ENCODE measurements at regions of chr11 and their contacts with region 1.

Region 1: DNA sequence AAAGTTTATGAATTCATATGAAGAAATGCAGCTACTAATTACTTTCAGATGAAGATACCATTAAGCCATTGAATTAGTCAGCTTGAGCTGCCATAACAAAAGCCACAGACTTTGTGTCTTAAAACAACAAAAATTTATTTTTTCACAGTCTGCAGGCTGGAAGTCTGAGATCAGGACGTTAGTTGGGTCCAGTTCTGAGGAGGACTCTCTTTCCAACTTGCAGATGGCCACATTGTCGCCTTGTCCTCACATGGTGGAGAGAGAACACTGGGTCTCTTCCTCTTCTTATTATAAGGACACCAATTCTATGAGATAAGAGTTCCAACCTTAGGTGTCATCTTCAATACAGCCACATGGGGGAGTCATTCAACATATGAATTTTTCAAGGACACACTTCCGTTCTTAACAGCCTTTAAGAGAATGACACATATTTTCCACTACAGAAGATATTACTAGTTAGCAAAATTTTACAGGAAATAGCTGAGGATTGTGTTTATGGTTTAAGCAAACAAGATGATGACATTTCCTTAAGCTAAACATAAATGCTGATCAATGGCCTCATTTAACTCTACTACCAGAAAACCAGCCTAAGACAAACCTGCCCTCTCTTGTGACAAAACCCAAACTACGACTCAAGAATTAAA is 56.0 kb downstream of the DCUN1D5 start:
- DNase-seq: peak; percentile 75
- ATAC-seq: peak; percentile 90
- H3K4me3 Mint-ChIP-seq: peak overlapping the region; percentile 38
- H3K27ac Mint-ChIP-seq: peak overlapping the region; percentile 79
- H3K4me1 Mint-ChIP-seq: peaks cover 14% of the 10 kb centered on the region
- H3K27me3 Mint-ChIP-seq: no peaks in the 10 kb centered on the region

Region 2: DNA sequence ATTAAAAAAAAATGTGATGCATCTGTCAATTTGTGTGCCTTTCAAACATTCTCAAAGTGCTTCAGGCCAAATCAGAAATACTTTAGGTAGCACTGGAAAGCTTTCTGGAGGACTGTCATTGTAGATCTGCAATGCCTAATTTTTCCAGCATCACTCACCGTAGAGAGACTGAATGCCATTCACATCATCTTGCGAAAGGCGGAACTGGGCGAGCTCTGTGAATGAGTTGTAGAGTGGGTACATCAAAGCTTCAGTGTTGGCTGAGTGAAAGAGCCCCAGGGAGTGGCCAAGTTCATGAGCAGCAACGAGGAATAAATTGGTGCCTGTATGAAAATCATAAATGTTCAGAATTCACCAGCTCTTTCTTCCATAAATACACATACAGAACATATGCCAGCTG is 259.5 kb before region 1 on chr11:
- CTCF ChIA-PET with region 1: no interaction called
- POLR2A ChIA-PET with region 1: no interaction called
- DNase-seq: no peak
- ATAC-seq: no peak
- H3K4me3 Mint-ChIP-seq: no peak overlapping the region
- H3K27ac Mint-ChIP-seq: no peak overlapping the region
- H3K4me1 Mint-ChIP-seq: no peaks in the 10 kb centered on the region
- H3K27me3 Mint-ChIP-seq: peaks cover 2% of the 10 kb centered on the region

Region 3: GRCh38 chr11:102940714-102941588 is 95.0 kb before region 1 on chr11:
- CTCF ChIA-PET with region 1: interaction called, 10 read pairs
- POLR2A ChIA-PET with region 1: no interaction called
- DNase-seq: peak; percentile 54
- ATAC-seq: peak; percentile 82
- H3K4me3 Mint-ChIP-seq: no peak overlapping the region
- H3K27ac Mint-ChIP-seq: no peak overlapping the region
- H3K4me1 Mint-ChIP-seq: peaks cover 2% of the 10 kb centered on the region
- H3K27me3 Mint-ChIP-seq: peaks cover 2% of the 10 kb centered on the region

Region 4: DNA sequence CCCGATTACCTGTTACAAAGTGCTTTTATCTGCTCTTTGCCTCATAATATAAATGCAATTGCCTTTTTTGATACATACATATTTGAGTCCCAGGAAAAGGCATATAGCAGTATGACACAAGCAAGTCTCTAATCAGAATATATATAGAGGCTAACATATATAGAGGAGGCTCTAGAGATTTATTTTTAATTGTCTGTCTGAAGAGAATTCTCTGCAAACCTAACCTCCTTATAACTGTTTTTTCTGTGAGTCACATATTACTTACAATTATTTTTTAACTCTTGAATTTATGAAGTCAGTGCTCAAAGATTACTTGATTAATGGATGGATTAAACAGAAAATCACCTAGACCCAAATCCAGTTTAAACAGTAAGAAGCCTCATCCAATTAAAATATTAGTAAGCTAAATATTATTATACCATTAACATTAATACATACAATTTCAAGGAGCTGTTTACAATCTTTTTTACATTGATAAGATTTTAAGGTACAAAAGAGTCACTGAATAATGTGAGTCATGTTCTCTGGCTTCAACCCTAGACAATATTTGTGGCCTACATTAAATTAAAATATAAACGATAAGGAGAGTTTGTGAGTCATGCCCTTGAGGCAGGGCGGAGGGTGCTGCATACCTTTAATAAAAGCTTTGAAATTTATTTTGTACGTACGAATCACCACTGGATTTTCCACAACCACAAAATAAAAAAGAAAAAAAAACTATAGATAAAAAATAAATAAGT is 61.2 kb before region 1 on chr11:
- CTCF ChIA-PET with region 1: no interaction called
- POLR2A ChIA-PET with region 1: no interaction called
- DNase-seq: no peak
- ATAC-seq: no peak
- H3K4me3 Mint-ChIP-seq: no peak overlapping the region
- H3K27ac Mint-ChIP-seq: no peak overlapping the region
- H3K4me1 Mint-ChIP-seq: no peaks in the 10 kb centered on the region
- H3K27me3 Mint-ChIP-seq: peaks cover 15% of the 10 kb centered on the region

Region 5: GRCh38 chr11:103055221-103055890 is 19.4 kb after region 1 on chr11:
- CTCF ChIA-PET with region 1: interaction called, 18 read pairs
- POLR2A ChIA-PET with region 1: no interaction called
- DNase-seq: no peak
- ATAC-seq: peak; percentile 57
- H3K4me3 Mint-ChIP-seq: no peak overlapping the region
- H3K27ac Mint-ChIP-seq: no peak overlapping the region
- H3K4me1 Mint-ChIP-seq: no peaks in the 10 kb centered on the region
- H3K27me3 Mint-ChIP-seq: no peaks in the 10 kb centered on the region

Region 6: DNA sequence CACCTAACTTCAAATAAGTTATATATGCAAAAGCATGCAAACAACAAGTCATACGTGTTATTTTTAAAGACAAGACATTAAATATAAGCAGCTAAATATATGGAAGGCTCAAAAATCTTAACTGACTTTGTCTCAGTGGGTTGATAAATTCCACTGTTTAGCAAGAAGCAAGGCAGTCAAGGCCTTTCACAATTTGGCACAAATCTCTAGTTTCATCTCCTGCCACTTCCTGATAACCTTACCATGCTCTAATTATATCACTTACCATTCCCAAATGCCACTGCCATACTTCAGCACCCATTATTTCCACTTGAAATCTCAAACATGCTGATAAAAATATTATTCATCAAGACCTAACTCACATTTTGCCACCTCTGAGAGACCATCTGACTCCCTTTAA is 31.2 kb after region 1 on chr11:
- CTCF ChIA-PET with region 1: interaction called, 11 read pairs
- POLR2A ChIA-PET with region 1: no interaction called
- DNase-seq: no peak
- ATAC-seq: no peak
- H3K4me3 Mint-ChIP-seq: no peak overlapping the region
- H3K27ac Mint-ChIP-seq: no peak overlapping the region
- H3K4me1 Mint-ChIP-seq: peaks cover 45% of the 10 kb centered on the region
- H3K27me3 Mint-ChIP-seq: no peaks in the 10 kb centered on the region

Region 7: DNA sequence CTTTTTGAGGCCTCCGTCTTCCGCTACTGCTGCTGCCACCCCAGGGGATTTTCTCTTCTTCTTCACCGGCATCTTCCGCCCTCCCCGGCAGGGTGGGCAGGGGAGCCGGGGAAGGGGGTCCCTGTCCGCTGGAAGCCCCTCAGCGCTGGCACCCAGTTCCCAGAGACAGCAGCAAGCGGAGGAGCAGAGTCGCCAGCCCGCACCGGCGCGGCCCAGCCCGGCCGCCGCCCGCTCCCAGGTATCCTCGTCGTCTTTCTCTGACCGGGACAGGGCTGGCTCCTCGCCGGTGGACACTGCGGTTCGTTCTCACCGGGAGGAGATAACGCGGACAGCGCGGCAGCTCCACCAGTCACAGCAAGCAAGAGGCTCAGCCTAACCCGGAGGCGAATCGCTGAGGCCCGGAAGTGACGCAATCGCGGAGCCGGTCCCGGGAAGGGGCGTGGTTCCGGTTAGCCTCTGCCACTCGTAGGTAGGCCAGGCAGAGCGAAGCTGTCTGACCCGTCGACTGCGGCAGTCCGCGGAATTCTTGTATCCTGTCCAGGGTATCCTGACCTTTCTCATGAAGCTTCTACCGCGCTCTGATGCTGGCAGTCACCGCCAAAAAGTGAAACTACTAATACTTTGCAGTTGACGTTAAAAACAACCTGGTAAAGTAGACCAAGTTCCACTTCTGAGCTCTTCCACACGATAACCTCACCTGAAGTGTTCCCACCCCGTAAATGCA is 56.0 kb after region 1 on chr11 and contains the start of gene DCUN1D5:
- CTCF ChIA-PET with region 1: interaction called, 10 read pairs
- POLR2A ChIA-PET with region 1: no interaction called
- DNase-seq: peak; percentile 97
- ATAC-seq: peak; percentile 94
- H3K4me3 Mint-ChIP-seq: peak within 1 kb of the TSS; percentile 91
- H3K27ac Mint-ChIP-seq: peak within 1 kb of the TSS; percentile 95
- H3K4me1 Mint-ChIP-seq: peaks cover 27% of the 10 kb centered on the region
- H3K27me3 Mint-ChIP-seq: peaks cover 24% of the 10 kb centered on the region
- total RNA-seq, gene DCUN1D5: 31.3 to 34.0 TPM

Region 8: GRCh38 chr11:103108933-103109817 is 73.3 kb after region 1 on chr11 and contains the start of gene DYNC2H1:
- CTCF ChIA-PET with region 1: interaction called, 16 read pairs
- POLR2A ChIA-PET with region 1: interaction called, 6 read pairs
- DNase-seq: peak; percentile 90
- ATAC-seq: peak; percentile 93
- H3K4me3 Mint-ChIP-seq: peak within 1 kb of the TSS; percentile 87
- H3K27ac Mint-ChIP-seq: peak within 1 kb of the TSS; percentile 83
- H3K4me1 Mint-ChIP-seq: peaks cover 19% of the 10 kb centered on the region
- H3K27me3 Mint-ChIP-seq: peaks cover 16% of the 10 kb centered on the region
- total RNA-seq, gene DYNC2H1: 1.6 to 1.7 TPM